Gastrocnemius medialis (tissue), 4 donors: ENCODE measurements at regions of chr2 and their contacts with region 1.

Region 1: DNA sequence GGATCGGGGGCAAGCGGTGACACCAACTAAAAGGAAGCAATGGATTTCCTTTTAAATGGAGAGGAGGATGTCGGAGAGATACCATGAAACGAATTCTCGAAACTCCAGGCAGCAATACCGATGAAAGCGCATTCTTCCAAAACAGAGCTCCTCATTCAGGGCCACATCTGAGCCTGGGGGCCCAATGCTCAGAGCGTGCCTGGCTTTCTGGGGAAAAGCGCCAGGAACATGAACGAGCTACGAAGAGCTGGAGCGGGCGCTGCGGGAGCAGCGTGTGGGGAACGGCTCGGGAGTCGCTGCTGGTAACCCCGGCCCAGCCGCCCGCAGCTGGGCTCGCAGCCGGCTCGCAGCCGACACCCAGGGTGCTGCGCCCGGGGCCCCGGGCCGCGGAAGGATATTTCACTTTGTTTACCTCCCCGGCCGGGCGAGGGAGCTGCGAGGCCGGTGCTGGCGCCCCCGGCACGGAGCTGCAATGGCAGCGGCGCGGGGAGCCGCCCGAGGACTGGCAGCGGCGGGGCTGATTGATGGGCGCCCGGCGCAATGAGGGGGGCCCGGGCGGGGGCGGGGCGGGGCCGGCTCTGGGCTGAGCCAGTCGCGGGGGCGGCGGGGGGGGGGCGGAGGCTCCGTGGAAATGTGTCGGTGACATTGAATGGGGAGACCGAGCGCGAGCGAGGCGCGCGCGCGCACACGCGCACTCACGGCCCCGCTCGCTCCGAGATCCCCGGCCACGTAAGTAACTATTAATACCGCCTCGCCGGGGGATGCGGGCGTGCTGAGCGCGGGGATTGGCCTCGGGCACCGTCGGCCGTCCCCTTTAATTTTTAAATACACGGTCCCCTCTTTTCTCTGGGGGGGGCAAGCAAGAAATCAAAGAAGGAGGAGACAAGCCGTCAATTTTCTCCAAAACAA is at the start of gene TRIB2:
- DNase-seq: peak; percentile 77 to 89
- ATAC-seq: peak; percentile 61 to 71
- H3K4me3 ChIP-seq: peak within 1 kb of the TSS; percentile 83 to 97 (median 93)
- H3K27ac ChIP-seq: peak within 1 kb of the TSS; percentile 92 to 96 (median 95)
- H3K4me1 ChIP-seq: peaks cover 36 to 39% of the 10 kb centered on the region in 2 donors
- H3K27me3 ChIP-seq: no peaks in the 10 kb centered on the region
- CTCF ChIP-seq: peak in 1 of 5 experiments; percentile 28
- POLR2A ChIP-seq: peak; percentile 73 to 88
- total RNA-seq, gene TRIB2: 12.6 to 18.5 (median 15.9) TPM

Region 2: DNA sequence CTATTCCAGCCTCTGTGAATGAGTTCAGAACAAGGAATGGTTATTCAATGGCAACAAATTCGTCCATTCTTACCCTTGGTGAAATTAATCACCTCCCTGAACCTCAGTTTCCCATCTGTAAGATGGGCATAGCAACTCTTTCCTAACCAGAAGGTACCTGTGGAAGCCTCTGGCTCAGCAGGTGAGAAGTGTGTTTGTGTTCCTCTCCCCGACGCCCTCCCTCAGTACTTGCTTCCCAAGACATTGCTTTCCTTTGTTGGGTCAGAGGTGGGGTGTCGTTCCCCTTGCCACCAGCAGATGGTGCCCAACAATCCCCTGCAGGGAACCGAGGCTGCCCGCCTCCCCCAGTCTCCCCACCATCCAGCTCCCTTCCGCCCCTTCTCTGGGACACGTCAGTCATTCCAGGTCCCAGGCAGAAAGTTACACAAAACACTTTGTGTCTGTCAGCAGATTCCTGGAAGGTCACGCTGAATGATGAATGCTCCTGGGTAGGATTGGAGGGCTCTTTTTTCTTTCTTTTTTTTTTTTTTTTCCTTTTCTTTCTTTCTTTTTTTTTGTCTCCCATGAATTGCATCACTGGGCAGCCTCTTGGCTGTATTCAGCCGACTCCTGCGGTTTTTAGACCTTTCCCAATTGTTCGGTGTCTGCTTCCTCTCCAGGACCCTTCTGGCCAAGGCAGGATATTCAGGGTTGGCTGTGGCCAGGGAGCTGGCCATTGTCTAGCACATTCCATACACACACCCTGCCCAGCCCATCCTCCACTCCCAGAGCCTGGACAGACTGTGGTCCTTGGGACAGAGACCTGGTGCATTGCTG is 852.8 kb before region 1 on chr2:
- in situ Hi-C with region 1: loop called in 2 of 4 experiments (anchors 25 kb)
- intact Hi-C with region 1: loop called (anchors 2 kb)
- DNase-seq: peak; percentile 59 to 73
- ATAC-seq: peak; percentile 67 to 90
- H3K4me3 ChIP-seq: peak overlapping the region in 1 of 4 donors; percentile 20
- H3K27ac ChIP-seq: peak overlapping the region in 3 of 4 donors; percentile 31 to 46 (median 39)
- H3K4me1 ChIP-seq: peaks cover 5 to 6% of the 10 kb centered on the region in 2 donors
- H3K27me3 ChIP-seq: no peaks in the 10 kb centered on the region
- CTCF ChIP-seq: peak; percentile 76 to 95 (median 90)
- POLR2A ChIP-seq: no peak

Region 3: GRCh38 chr2:12430407-12431133 is 286.0 kb before region 1 on chr2:
- in situ Hi-C with region 1: loop called in 1 of 4 experiments (anchors 25 kb)
- intact Hi-C with region 1: no loop called
- DNase-seq: no peak
- ATAC-seq: no peak
- H3K4me3 ChIP-seq: no peak overlapping the region
- H3K27ac ChIP-seq: no peak overlapping the region
- H3K4me1 ChIP-seq: no peaks in the 10 kb centered on the region
- H3K27me3 ChIP-seq: no peaks in the 10 kb centered on the region
- CTCF ChIP-seq: no peak
- POLR2A ChIP-seq: no peak

Region 4: GRCh38 chr2:12824351-12824777 is 107.8 kb after region 1 on chr2:
- in situ Hi-C with region 1: no loop called
- intact Hi-C with region 1: loop called (anchors 2 kb)
- DNase-seq: no peak
- ATAC-seq: peak in 1 of 2 donors; percentile 7
- H3K4me3 ChIP-seq: no peak overlapping the region
- H3K27ac ChIP-seq: peak overlapping the region; percentile 61 to 83 (median 76)
- H3K4me1 ChIP-seq: peaks cover 7 to 27% of the 10 kb centered on the region in 2 donors
- H3K27me3 ChIP-seq: no peaks in the 10 kb centered on the region
- CTCF ChIP-seq: no peak
- POLR2A ChIP-seq: no peak

Region 5: DNA sequence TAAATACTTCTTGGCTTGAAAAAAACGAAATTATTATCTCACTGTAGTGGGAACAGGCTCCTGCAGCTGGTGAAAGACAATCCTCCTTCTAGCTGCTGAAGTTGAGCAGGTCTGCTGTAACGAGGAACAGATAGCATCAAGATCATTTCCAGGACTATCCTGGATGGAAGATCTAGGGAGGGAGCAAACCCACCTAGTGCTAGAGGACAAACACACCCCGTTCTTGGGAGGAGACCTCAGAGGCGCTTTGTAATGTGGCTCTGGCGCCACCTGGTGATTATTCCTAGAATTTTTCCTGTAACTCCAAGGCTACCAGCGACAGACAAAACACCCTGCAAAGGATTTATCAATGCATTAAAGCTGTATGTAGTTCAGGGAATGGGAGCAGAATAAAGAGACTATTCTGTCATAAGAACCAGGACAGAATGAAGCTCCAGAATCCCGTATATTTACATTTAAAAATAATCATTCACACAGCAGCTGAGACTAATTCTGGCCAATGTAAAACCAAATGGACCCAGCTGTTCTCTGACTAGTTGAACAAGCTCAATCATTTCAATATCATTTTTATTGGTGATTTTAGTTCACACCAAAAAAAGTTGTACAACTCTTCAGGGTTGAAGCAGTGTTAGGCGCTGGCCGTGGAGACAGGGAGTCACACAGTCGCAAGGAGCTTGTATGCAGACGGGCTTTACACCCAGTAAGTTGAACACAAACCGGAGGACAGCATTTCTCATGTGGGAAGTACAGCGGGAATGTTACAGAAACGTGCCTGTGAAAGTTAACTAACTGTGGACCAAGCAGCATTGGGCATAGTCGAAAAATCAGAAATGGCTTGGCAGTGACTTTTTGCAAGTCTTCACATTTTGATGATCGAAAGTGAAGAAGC is 290.5 kb after region 1 on chr2:
- in situ Hi-C with region 1: no loop called
- intact Hi-C with region 1: loop called (anchors 5 kb)
- DNase-seq: peak; percentile 13 to 21
- ATAC-seq: peak; percentile 71 to 80
- H3K4me3 ChIP-seq: peak overlapping the region in 2 of 4 donors; percentile 19 to 27
- H3K27ac ChIP-seq: peak overlapping the region in 3 of 4 donors; percentile 11 to 38 (median 17)
- H3K4me1 ChIP-seq: peaks cover 0 to 4% of the 10 kb centered on the region in 2 donors
- H3K27me3 ChIP-seq: no peaks in the 10 kb centered on the region
- CTCF ChIP-seq: peak; percentile 62 to 91 (median 72)
- POLR2A ChIP-seq: no peak